ENCODE measurements at regions of chr20 and their contacts with region 1.

Region 1: DNA sequence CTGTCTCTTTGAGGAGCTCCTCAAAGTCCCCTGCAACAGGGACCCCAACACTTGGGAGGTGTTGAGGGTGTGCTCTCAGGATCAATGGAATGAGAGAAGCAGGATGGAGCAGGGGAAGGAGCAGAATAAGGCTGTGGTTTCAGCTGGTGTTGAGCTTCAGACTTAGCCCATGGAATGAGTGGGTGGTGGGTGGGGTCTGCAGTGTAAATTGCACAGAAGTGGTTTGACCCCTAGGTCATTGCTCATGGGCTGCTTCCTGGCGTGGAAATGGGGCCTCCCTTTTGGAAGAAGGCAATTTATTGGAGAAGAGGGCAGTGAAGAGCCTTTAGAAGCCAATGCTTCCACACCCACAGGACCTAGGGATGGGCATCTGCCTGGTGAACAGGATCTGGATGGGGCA is 37.0 kb upstream of the KCNG1 start:
- DNase-seq: peak; percentile 20
- ATAC-seq: no peak
- H3K4me3 Mint-ChIP-seq: no peak overlapping the region
- H3K27ac Mint-ChIP-seq: peak overlapping the region; percentile 66
- H3K4me1 Mint-ChIP-seq: peaks cover 53% of the 10 kb centered on the region
- H3K27me3 Mint-ChIP-seq: peaks cover 28% of the 10 kb centered on the region

Region 2: GRCh38 chr20:50491926-50492634 is 567.8 kb before region 1 on chr20:
- CTCF ChIA-PET with region 1: no interaction called
- POLR2A ChIA-PET with region 1: no interaction called
- intact Hi-C with region 1: loop called in 1 of 2 experiments (anchors 5 kb)
- DNase-seq: no peak
- ATAC-seq: no peak
- H3K4me3 Mint-ChIP-seq: no peak overlapping the region
- H3K27ac Mint-ChIP-seq: peak overlapping the region; percentile 95
- H3K4me1 Mint-ChIP-seq: peaks cover 36% of the 10 kb centered on the region
- H3K27me3 Mint-ChIP-seq: no peaks in the 10 kb centered on the region

Region 3: GRCh38 chr20:50980851-50981713 is 78.8 kb before region 1 on chr20:
- CTCF ChIA-PET with region 1: interaction called, 7 read pairs
- POLR2A ChIA-PET with region 1: no interaction called
- intact Hi-C with region 1: loop called in 1 of 2 experiments (anchors 1 kb)
- DNase-seq: peak; percentile 84
- ATAC-seq: no peak
- H3K4me3 Mint-ChIP-seq: no peak overlapping the region
- H3K27ac Mint-ChIP-seq: peak overlapping the region; percentile 90
- H3K4me1 Mint-ChIP-seq: peaks cover 20% of the 10 kb centered on the region
- H3K27me3 Mint-ChIP-seq: peaks cover 26% of the 10 kb centered on the region

Region 4: DNA sequence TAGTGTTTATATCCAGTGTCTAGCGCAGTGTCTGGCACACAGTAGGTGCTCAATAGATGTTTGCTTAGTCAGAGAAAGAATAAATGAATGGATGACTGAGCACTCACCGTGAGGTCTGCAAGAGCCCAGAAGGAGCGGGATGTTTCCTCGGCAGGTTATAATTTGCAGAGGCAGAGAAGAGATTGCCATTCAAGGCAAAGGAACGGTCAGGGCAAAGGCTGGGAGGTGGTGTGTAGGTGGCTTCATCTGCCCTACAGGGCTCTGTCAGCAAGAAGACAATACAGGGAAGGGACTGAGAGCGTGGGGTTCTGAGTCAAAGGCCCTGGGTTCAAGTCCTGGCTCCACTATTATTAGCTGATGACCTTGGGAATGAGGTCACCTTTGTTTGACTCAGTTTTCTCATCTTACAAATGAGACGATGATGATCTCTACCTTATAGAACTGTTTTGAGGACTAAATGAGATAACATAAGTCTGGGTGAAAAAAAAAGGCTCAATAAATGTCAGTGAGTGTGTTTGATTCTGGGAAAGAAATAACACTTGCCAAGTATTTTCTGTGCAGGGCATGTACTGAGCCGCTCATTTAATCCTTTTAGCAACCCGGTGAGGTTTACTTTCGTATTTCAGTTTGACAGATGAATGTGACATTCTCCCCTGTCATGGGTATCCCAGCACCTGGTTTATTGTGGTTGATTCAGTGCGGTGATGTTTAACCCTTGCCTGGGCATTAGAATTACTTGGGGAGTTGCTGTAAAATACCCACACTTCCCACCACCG is 62.8 kb after region 1 on chr20:
- CTCF ChIA-PET with region 1: no interaction called
- POLR2A ChIA-PET with region 1: no interaction called
- intact Hi-C with region 1: loop called (anchors 1 kb)
- DNase-seq: peak; percentile 51
- ATAC-seq: peak; percentile 96
- H3K4me3 Mint-ChIP-seq: no peak overlapping the region
- H3K27ac Mint-ChIP-seq: no peak overlapping the region
- H3K4me1 Mint-ChIP-seq: peaks cover 14% of the 10 kb centered on the region
- H3K27me3 Mint-ChIP-seq: peaks cover 31% of the 10 kb centered on the region

Region 5: DNA sequence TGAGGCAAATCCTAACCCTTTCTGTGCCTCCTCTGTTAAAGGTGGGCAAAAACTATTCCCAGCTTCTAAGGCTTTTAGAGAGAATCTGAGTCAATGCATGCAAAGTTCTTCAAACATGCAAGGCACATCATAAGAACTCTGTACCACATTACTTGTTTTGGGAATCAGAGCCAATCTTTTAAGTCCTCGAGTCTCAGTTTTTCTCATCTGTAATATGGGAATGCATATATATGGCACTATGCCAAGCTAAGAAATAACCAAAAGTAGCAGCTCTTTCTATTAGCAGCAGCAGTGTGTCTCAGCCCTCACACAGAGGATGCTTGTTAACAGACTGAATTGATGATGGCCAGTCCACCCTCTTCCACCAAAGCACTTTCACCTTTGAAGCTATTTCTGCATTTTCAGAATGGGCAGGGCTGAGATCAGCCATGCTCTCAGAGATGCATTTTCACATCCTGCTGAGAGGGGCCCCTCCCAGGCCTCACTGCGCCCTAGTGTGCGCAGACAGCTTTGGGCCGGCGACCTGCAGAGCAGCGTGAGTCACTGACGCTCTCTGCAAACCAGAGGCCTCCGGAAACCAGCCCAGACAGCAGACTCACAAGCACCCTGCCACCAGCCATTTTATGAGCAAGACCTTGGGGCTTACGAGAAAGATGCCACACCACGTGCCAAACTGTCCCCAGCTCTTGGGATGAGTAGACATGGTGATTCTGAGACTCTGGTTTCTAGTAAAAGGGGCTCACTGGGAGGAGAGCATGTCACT is 344.6 kb after region 1 on chr20:
- CTCF ChIA-PET with region 1: no interaction called
- POLR2A ChIA-PET with region 1: no interaction called
- intact Hi-C with region 1: loop called in 1 of 2 experiments (anchors 5 kb)
- DNase-seq: peak; percentile 94
- ATAC-seq: peak; percentile 81
- H3K4me3 Mint-ChIP-seq: peak overlapping the region; percentile 1
- H3K27ac Mint-ChIP-seq: peak overlapping the region; percentile 96
- H3K4me1 Mint-ChIP-seq: peaks cover 89% of the 10 kb centered on the region
- H3K27me3 Mint-ChIP-seq: no peaks in the 10 kb centered on the region

Region 6: GRCh38 chr20:51480507-51481270 is 420.8 kb after region 1 on chr20:
- CTCF ChIA-PET with region 1: no interaction called
- POLR2A ChIA-PET with region 1: no interaction called
- intact Hi-C with region 1: loop called in 1 of 2 experiments (anchors 1 kb)
- DNase-seq: peak; percentile 89
- ATAC-seq: peak; percentile 83
- H3K4me3 Mint-ChIP-seq: peak overlapping the region; percentile 59
- H3K27ac Mint-ChIP-seq: peak overlapping the region; percentile 95
- H3K4me1 Mint-ChIP-seq: peaks cover 90% of the 10 kb centered on the region
- H3K27me3 Mint-ChIP-seq: no peaks in the 10 kb centered on the region

Region 7: DNA sequence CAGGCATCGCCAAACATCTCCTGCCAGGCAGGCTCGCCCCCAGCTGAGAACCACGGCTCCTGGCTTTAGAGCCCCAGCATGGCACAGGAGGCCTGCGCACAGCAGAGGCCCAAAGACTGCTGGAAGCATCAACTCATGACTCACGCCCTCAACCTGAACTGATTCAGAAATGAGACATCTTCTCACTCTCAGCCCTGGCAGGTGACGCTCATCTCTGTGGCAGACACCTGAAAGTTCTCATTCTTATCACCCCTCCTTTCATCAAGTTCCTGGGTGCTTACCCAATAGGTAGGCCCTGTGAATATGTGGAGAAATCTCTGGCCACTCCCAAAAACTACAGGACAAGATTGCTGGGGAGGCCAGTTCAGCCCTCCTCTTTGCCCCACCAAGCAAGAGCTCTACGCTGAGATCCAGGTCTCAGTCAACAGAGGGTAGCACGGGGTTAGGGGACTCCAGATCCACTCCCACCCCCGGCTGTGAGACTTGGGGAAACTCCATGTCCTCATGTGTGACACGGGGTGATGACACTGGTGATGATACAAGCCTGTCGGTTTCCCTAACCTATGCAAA is 471.4 kb after region 1 on chr20:
- CTCF ChIA-PET with region 1: no interaction called
- POLR2A ChIA-PET with region 1: no interaction called
- intact Hi-C with region 1: loop called in 1 of 2 experiments (anchors 2 kb)
- DNase-seq: peak; percentile 90
- ATAC-seq: peak; percentile 82
- H3K4me3 Mint-ChIP-seq: peak overlapping the region; percentile 75
- H3K27ac Mint-ChIP-seq: peak overlapping the region; percentile 99
- H3K4me1 Mint-ChIP-seq: peaks cover 99% of the 10 kb centered on the region
- H3K27me3 Mint-ChIP-seq: no peaks in the 10 kb centered on the region

Measured in activated CD4-positive, alpha-beta T cell treated with anti-CD3 and anti-CD28 coated beads for 36 hours (primary cell).